ENCODE measurements at regions of chr16 and their contacts with region 1.

Region 1: DNA sequence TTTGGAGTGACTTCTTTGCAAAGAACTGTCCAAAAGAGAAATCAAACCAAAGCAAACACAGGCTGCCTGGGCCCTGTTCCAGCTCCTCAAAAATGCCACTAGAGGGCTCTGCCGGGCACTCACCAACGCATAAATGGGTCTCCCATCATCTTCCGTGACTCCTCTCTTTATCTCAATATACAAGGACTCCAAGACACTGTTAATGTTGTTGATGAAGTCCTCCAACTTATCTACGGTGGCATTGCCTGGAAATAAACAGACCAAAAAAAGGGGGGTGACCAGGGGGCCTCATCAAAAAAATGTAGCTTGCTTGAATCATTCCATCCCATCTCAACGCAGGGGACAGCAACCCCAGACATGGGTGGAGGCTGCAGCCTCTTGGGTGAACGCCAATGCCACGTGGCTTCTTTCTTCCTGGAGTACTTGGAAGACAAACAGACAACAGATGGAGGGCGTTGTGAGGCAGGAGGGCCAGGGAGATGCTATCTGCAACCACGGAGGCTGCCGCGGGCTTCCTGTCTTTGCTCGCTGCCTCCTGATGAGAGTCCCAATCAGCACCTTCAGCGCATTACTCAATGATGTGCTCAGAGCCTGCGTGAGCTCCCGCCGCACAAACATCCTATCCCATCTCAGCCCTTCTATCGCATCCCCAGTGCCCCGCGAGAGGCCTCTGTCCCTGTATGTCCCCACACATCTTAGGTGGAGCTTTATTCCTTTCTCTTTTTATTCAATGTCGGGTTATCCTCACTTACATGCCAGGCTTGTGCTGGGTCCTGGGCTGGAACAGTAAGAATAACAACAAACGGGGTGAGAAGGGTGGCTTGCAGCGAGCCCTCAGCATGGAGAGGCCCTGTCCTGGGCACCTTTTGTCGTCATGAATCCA is 32.0 kb downstream of the KDM8 start:
- DNase-seq: peak; percentile 84
- H3K4me3 Mint-ChIP-seq: no peak overlapping the region
- H3K27ac Mint-ChIP-seq: no peak overlapping the region
- H3K4me1 Mint-ChIP-seq: peaks cover 23% of the 10 kb centered on the region
- H3K27me3 Mint-ChIP-seq: no peaks in the 10 kb centered on the region
- CTCF ChIP-seq: peak; percentile 77

Region 2: GRCh38 chr16:26963114-26963513 is 272.2 kb before region 1 on chr16:
- CTCF ChIA-PET with region 1: no interaction called
- POLR2A ChIA-PET with region 1: no interaction called
- intact Hi-C with region 1: no loop called
- DNase-seq: no peak
- H3K4me3 Mint-ChIP-seq: no peak overlapping the region
- H3K27ac Mint-ChIP-seq: no peak overlapping the region
- H3K4me1 Mint-ChIP-seq: no peaks in the 10 kb centered on the region
- H3K27me3 Mint-ChIP-seq: no peaks in the 10 kb centered on the region
- CTCF ChIP-seq: no peak

Region 3: GRCh38 chr16:27189335-27189972 is 45.8 kb before region 1 on chr16:
- CTCF ChIA-PET with region 1: no interaction called
- POLR2A ChIA-PET with region 1: no interaction called
- intact Hi-C with region 1: no loop called
- DNase-seq: no peak
- H3K4me3 Mint-ChIP-seq: no peak overlapping the region
- H3K27ac Mint-ChIP-seq: no peak overlapping the region
- H3K4me1 Mint-ChIP-seq: no peaks in the 10 kb centered on the region
- H3K27me3 Mint-ChIP-seq: peaks cover 11% of the 10 kb centered on the region
- CTCF ChIP-seq: no peak

Region 4: GRCh38 chr16:27211026-27211425 is 24.3 kb before region 1 on chr16:
- CTCF ChIA-PET with region 1: interaction called, 11 read pairs
- POLR2A ChIA-PET with region 1: no interaction called
- intact Hi-C with region 1: no loop called
- DNase-seq: no peak
- H3K4me3 Mint-ChIP-seq: no peak overlapping the region
- H3K27ac Mint-ChIP-seq: no peak overlapping the region
- H3K4me1 Mint-ChIP-seq: no peaks in the 10 kb centered on the region
- H3K27me3 Mint-ChIP-seq: no peaks in the 10 kb centered on the region
- CTCF ChIP-seq: no peak

Region 5: DNA sequence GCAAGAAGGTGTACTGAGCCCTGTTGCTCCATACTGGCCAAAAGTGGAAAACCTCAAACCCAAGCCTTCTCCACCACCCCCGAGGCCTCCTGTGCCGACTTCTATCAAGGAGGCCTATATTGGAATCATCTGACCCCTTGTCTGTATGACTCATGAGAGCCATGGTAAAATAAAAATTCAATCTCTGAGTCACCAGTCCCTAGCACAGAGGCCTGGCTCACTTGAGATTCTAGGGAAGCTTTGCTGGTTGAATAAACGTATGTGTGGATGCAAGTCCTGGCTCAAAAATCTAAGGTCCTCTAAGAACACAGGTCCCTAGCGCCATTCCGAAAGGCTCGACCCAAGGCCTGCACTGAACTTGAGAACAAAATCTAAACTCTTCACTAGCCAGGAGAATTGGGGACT is 18.2 kb after region 1 on chr16:
- CTCF ChIA-PET with region 1: interaction called, 38 read pairs
- POLR2A ChIA-PET with region 1: no interaction called
- intact Hi-C with region 1: no loop called
- DNase-seq: peak; percentile 69
- H3K4me3 Mint-ChIP-seq: no peak overlapping the region
- H3K27ac Mint-ChIP-seq: no peak overlapping the region
- H3K4me1 Mint-ChIP-seq: peaks cover 23% of the 10 kb centered on the region
- H3K27me3 Mint-ChIP-seq: no peaks in the 10 kb centered on the region
- CTCF ChIP-seq: no peak

Region 6: DNA sequence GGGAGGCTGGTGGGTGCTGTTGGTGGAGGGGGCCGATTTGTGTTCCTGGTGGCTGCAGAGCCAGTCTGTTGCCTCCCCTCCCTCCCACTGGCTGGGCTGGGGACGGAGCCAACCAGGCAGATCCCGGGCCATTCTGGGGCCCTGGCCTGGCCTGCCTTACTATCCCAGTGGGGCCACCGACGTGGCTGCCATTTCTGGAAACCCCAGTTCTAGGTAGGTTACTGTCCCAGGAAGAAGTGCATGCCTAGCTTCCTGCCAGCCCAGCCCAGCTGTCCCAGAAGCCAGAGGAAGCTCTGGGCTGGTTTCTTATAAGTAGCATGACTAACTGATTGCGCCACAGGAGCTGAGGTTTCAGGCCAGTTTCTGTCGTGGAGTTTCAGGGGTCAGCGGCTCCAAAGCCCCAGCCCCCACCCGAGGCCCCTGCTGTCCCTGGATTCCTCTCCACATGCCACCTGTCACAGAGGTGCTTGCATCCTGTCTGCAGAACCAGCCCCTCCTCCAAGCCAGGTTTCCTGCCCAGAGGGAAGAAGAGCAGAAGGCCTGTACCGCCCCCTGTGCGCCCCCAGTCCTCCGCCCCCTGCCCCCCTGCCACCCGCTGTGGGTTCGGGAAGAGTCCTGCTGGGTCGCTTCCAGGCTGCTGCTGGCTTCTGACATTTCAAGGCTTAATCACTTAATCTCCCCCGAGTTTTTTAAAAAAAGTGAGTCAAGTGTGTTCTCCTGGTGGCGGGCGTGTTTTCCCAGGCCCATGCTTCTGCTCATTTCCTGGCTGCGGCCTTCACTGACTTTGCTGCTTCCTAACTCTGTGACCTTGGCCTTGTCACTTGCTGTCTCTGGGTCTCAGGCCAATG is 91.7 kb after region 1 on chr16:
- CTCF ChIA-PET with region 1: interaction called, 18 read pairs
- POLR2A ChIA-PET with region 1: interaction called, 4 read pairs
- intact Hi-C with region 1: loop called (anchors 1 kb)
- DNase-seq: peak; percentile 97
- H3K4me3 Mint-ChIP-seq: peak overlapping the region; percentile 56
- H3K27ac Mint-ChIP-seq: peak overlapping the region; percentile 92
- H3K4me1 Mint-ChIP-seq: peaks cover 31% of the 10 kb centered on the region
- H3K27me3 Mint-ChIP-seq: no peaks in the 10 kb centered on the region
- CTCF ChIP-seq: peak; percentile 9

Region 7: DNA sequence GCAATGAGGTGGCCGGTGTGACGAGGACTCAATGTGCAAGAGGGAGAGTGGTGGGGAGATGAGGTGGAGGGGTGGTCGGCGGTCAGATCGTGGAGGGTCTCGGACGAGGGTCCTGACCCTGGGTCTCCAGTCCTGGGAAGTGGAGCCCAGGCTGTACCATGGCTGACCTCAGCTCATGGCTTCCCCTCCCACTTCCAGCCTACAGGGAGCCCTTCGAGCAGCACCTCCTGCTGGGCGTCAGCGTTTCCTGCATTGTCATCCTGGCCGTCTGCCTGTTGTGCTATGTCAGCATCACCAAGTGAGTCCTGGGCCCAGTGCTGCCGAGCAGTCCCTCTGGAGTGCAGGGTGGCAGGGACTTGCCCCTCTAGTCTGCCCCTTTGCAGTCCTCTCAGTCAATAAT is 120.3 kb after region 1 on chr16:
- CTCF ChIA-PET with region 1: interaction called, 23 read pairs
- POLR2A ChIA-PET with region 1: no interaction called
- intact Hi-C with region 1: no loop called
- DNase-seq: peak; percentile 52
- H3K4me3 Mint-ChIP-seq: no peak overlapping the region
- H3K27ac Mint-ChIP-seq: no peak overlapping the region
- H3K4me1 Mint-ChIP-seq: no peaks in the 10 kb centered on the region
- H3K27me3 Mint-ChIP-seq: no peaks in the 10 kb centered on the region
- CTCF ChIP-seq: peak; percentile 24

Region 8: GRCh38 chr16:27374804-27375425 is 139.6 kb after region 1 on chr16:
- CTCF ChIA-PET with region 1: interaction called, 248 read pairs
- POLR2A ChIA-PET with region 1: no interaction called
- intact Hi-C with region 1: no loop called
- DNase-seq: peak; percentile 49
- H3K4me3 Mint-ChIP-seq: no peak overlapping the region
- H3K27ac Mint-ChIP-seq: no peak overlapping the region
- H3K4me1 Mint-ChIP-seq: no peaks in the 10 kb centered on the region
- H3K27me3 Mint-ChIP-seq: no peaks in the 10 kb centered on the region
- CTCF ChIP-seq: no peak

Region 9: DNA sequence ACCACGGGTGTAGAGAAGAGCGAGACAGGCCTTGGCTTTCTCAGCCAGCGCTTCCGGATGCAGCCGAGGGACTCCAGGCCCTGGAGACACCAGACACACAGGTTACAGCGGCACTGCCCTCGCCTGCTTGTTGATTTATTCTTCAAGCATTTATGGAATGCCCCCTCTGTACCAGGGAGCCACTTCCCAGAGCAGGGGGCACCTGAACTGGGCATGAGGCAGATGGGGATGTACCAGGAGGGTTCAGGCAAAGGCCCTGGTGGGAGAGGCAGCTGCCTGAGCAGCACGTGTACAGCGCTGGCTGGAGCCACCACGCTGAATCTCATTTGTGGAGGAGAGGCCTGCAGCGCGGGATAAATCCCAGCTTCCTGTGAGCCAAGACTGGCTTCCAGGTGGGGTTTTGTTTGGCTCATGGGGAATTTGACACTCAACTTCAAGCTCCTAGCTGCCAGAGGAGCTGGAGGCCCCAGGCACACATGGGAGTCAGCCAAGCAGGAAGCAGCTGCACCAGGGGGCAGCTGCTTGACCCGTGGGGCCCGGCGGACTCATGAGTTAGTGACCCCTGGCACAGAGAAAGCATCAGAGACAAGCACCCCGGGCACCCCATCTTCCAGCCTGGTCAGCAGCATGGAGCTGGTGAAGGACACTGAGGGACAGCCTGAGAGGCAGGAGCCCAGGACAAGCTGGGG is 226.3 kb after region 1 on chr16:
- CTCF ChIA-PET with region 1: interaction called, 17 read pairs
- POLR2A ChIA-PET with region 1: no interaction called
- intact Hi-C with region 1: loop called (anchors 1 kb)
- DNase-seq: no peak
- H3K4me3 Mint-ChIP-seq: no peak overlapping the region
- H3K27ac Mint-ChIP-seq: peak overlapping the region; percentile 16
- H3K4me1 Mint-ChIP-seq: no peaks in the 10 kb centered on the region
- H3K27me3 Mint-ChIP-seq: no peaks in the 10 kb centered on the region
- CTCF ChIP-seq: no peak